HEK293 (cell line): ENCODE measurements at regions of chr3 and their contacts with region 1.

Region 1: GRCh38 chr3:169323578-169324451 is 339.7 kb downstream of the MECOM start:
- H3K4me3 ChIP-seq: no peak overlapping the region
- H3K27ac ChIP-seq: no peak overlapping the region
- H3K4me1 ChIP-seq: peaks cover 6% of the 10 kb centered on the region
- CTCF ChIP-seq: no peak

Region 2: DNA sequence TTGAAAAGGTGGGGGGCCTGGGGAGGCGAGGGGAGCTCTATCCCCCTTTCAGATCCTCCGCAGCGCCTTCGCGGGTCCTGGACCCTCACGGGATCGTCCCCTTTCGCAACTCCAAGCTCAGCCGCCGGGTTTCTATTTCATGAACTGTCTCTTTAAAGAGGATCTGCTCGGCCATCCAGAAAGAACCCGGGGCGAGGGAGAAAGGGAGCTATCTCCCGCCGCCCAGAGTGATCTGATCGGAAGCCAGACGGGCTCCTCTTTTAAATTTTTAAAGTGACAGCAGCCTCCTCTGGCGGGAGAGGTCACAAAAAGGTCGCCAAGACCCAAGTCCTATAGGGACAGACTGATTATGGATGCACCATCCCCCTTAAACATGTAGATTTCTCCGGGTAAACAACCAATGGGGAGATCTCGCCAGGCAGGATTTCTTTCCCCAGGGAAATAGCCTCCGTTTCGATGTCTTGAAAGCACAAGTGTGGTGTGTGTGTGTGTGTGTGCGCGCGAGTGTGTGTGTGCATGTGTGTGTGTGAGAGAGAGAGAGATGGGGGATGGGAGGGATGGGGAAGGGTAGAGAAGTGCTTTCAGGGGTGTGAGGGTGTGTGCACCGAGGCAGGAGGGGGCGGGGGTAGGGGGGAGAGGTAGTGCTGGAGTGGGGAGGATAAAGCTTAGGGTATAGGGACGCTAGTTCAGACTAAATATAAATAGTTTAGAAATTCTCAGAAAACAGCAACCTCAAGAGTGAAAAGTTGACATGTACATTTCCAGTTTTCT is 176.4 kb before region 1 on chr3:
- CTCF ChIA-PET with region 1: no interaction called
- POLR2A ChIA-PET with region 1: no interaction called
- H3K4me3 ChIP-seq: peak overlapping the region; percentile 70
- H3K27ac ChIP-seq: peak overlapping the region; percentile 94
- H3K4me1 ChIP-seq: peaks cover 4% of the 10 kb centered on the region; the same call in 1 of the 2 replicates
- CTCF ChIP-seq: no peak

Region 3: GRCh38 chr3:169399068-169399467 is 75.3 kb after region 1 on chr3:
- CTCF ChIA-PET with region 1: interaction called, 11 read pairs
- POLR2A ChIA-PET with region 1: no interaction called
- H3K4me3 ChIP-seq: no peak overlapping the region
- H3K27ac ChIP-seq: no peak overlapping the region
- H3K4me1 ChIP-seq: no peaks in the 10 kb centered on the region
- CTCF ChIP-seq: no peak